Natural killer cell (primary cell): ENCODE measurements at regions of chr1 and their contacts with region 1.

Region 1: DNA sequence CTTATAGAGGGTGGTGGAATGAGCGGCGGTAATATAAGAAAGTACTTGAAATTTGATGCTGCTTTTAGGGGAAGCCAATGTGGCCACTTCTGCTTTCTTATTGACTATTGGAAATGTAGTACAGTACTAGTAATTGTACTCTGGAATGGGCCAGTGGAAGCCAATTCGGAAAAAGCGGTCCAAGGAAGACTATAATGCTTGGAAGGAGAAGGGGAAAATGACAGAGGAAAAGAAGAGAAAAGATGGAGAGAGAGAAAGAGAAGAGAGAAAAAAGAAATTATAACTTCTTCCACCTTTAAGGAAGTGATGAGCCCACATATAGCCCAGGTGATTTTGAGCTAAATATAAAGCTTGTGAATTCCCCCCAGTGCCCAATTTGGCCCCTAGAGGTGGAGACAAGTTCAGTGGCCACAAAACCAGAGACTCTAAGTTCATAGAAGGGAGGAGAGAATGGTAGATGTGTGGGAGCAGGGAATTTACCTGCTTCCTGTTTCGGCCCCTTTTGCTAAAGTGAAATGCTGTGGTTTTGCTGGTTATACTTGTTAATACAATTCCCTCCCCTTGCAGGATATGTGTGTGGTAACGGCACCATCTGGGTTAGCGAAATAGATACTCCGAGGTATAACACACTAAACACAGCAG is 35.7 kb upstream of the DUSP10 start:
- DNase-seq: peak; percentile 42 to 88
- ATAC-seq: peak; percentile 63 to 85 (median 81)
- H3K4me3 ChIP-seq: no peak overlapping the region
- H3K4me3 Mint-ChIP-seq: peak overlapping the region; percentile 68
- H3K27ac ChIP-seq: peak overlapping the region; percentile 84
- H3K27ac Mint-ChIP-seq: peak overlapping the region; percentile 90 to 99
- H3K4me1 ChIP-seq: peaks cover 62% of the 10 kb centered on the region
- H3K4me1 Mint-ChIP-seq: peaks cover 67 to 71% of the 10 kb centered on the region in 2 donors
- H3K27me3 ChIP-seq: no peaks in the 10 kb centered on the region
- H3K27me3 Mint-ChIP-seq: no peaks in the 10 kb centered on the region
- CTCF ChIP-seq: no peak

Region 2: GRCh38 chr1:221839796-221840395 is 62.3 kb after region 1 on chr1:
- intact Hi-C with region 1: loop called (anchors 1 kb)
- DNase-seq: peak; percentile 82 to 86
- ATAC-seq: peak; percentile 82 to 94 (median 93)
- H3K4me3 ChIP-seq: no peak overlapping the region
- H3K4me3 Mint-ChIP-seq: peak overlapping the region; percentile 13
- H3K27ac ChIP-seq: peak overlapping the region; percentile 34
- H3K27ac Mint-ChIP-seq: peak overlapping the region; percentile 89 to 92
- H3K4me1 ChIP-seq: peaks cover 28% of the 10 kb centered on the region
- H3K4me1 Mint-ChIP-seq: peaks cover 37 to 43% of the 10 kb centered on the region in 2 donors
- H3K27me3 ChIP-seq: no peaks in the 10 kb centered on the region
- H3K27me3 Mint-ChIP-seq: peaks cover 0 to 3% of the 10 kb centered on the region in 2 donors
- CTCF ChIP-seq: no peak

Region 3: DNA sequence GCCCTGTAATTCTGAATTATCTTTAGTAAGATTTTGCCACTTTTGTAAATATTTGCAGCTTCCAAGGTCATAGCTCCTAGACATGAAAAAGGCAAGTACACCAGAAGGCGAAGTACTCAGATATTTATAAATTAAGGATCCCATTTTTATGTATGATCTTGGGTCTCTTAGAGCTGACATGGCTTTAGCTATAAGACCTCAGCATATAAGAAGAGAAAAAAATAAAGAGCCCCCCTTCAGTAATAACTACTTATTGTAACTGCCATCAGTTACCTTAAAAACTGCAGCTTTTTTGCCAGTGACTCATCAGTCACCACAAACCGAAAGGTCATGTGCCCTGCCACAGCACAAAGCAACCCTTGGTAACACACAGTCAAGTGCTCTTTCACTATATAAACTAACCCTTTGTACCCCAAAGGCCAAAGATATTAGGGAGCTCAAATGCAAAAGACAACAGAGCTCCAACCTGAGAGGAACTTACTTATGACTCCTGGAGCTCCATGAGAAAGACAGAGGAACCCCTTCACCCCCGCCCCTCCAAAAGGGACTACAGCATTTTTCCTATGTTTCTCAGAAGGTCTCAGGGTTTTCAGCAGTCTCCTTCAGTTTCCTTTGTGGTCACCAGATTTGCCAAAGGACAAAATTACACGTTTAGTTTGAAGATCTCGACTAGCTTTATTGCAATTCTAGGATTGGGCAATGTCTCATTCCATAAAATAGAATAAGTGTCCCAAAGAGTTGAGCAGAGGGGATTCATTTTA is 184.2 kb after region 1 on chr1:
- intact Hi-C with region 1: loop called (anchors 2 kb)
- DNase-seq: peak; percentile 46 to 68
- ATAC-seq: peak; percentile 79 to 99 (median 96)
- H3K4me3 ChIP-seq: no peak overlapping the region
- H3K4me3 Mint-ChIP-seq: no peak overlapping the region
- H3K27ac ChIP-seq: no peak overlapping the region
- H3K27ac Mint-ChIP-seq: peak overlapping the region; percentile 52 to 80
- H3K4me1 ChIP-seq: peaks cover 4% of the 10 kb centered on the region
- H3K4me1 Mint-ChIP-seq: peaks cover 14 to 17% of the 10 kb centered on the region in 2 donors
- H3K27me3 ChIP-seq: no peaks in the 10 kb centered on the region
- H3K27me3 Mint-ChIP-seq: no peaks in the 10 kb centered on the region
- CTCF ChIP-seq: no peak